ENCODE measurements at regions of chr4 and their contacts with region 1.

Region 1: GRCh38 chr4:6986781-6987587 is 56.2 kb upstream of the TADA2B start:
- DNase-seq: peak; percentile 96
- H3K4me3 ChIP-seq: peak overlapping the region; percentile 54 to 75 (median 63)
- H3K27ac ChIP-seq: peak overlapping the region; percentile 95 to 97 (median 96)
- H3K4me1 ChIP-seq: peaks cover 24 to 64% (median 45%) of the 10 kb centered on the region in 4 donors
- H3K27me3 ChIP-seq: no peaks in the 10 kb centered on the region
- CTCF ChIP-seq: peak in 2 of 5 experiments; percentile 22 to 29
- EP300 ChIP-seq: no peak
- POLR2A ChIP-seq: peak; percentile 86

Region 2: DNA sequence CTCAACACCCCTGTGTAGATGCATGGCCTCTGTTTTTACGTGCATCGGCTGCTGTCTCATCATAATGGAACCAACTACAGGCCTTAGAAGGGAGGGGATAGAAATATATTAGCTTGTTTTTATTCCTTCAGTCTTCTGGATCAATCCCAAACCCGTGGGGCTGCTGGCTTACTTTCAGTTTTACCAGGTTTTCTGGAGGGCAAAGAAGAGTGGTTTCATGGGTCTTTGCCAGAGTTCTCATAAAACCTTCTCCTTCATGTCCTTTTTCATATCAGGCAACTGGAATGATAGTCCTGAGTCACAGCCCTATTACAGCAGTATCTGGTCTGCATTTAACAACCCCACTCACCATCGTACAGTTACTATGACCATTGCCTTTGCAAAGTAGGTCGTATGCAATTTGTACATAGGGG is 549.2 kb before region 1 on chr4:
- in situ Hi-C with region 1: no loop called
- intact Hi-C with region 1: no loop called
- DNase-seq: no peak
- H3K4me3 ChIP-seq: no peak overlapping the region
- H3K27ac ChIP-seq: no peak overlapping the region
- H3K4me1 ChIP-seq: no peaks in the 10 kb centered on the region
- H3K27me3 ChIP-seq: peaks cover 8% of the 10 kb centered on the region
- CTCF ChIP-seq: no peak
- EP300 ChIP-seq: no peak
- POLR2A ChIP-seq: no peak

Region 3: GRCh38 chr4:6909073-6909965 is 77.7 kb before region 1 on chr4 and contains the start of gene TBC1D14:
- in situ Hi-C with region 1: no loop called
- intact Hi-C with region 1: loop called (anchors 10 kb)
- DNase-seq: peak; percentile 91
- H3K4me3 ChIP-seq: peak within 1 kb of the TSS; percentile 75 to 91 (median 86)
- H3K27ac ChIP-seq: peak within 1 kb of the TSS; percentile 97 to 99 (median 99)
- H3K4me1 ChIP-seq: peaks cover 6 to 49% (median 34%) of the 10 kb centered on the region in 4 donors
- H3K27me3 ChIP-seq: peaks cover 3% of the 10 kb centered on the region
- CTCF ChIP-seq: peak in 3 of 5 experiments; percentile 8 to 44 (median 15)
- EP300 ChIP-seq: no peak
- POLR2A ChIP-seq: peak; percentile 62
- total RNA-seq, gene TBC1D14: 42.6 to 56.9 (median 54.0) TPM

Measured in transverse colon (tissue), 4 donors.